ENCODE measurements at regions of chr9 and their contacts with region 1.

Region 1: DNA sequence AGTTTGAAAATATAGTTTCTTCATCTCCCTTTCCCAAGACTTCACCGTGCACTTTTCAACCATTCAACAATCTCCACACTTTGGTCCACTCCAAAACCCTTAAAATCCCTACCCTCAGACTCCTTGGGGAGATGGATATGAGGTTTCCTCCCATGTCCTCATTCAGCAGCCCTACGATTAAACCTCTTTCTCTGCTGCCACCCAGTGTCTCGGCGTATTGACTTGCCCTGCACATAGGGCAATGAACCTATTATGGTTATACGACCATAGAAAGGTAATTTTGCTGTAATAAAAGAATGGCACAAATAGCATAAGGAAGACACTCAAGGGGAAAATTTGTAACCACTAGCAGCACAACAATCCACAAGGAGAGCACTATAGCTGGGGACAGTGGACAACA is 803.5 kb downstream of the TLE1 start:
- DNase-seq: peak; percentile 51
- H3K4me3 ChIP-seq: no peak overlapping the region
- H3K27ac ChIP-seq: no peak overlapping the region
- H3K4me1 ChIP-seq: peaks cover 11% of the 10 kb centered on the region
- H3K27me3 ChIP-seq: no peaks in the 10 kb centered on the region
- CTCF ChIP-seq: peak; percentile 53

Region 2: DNA sequence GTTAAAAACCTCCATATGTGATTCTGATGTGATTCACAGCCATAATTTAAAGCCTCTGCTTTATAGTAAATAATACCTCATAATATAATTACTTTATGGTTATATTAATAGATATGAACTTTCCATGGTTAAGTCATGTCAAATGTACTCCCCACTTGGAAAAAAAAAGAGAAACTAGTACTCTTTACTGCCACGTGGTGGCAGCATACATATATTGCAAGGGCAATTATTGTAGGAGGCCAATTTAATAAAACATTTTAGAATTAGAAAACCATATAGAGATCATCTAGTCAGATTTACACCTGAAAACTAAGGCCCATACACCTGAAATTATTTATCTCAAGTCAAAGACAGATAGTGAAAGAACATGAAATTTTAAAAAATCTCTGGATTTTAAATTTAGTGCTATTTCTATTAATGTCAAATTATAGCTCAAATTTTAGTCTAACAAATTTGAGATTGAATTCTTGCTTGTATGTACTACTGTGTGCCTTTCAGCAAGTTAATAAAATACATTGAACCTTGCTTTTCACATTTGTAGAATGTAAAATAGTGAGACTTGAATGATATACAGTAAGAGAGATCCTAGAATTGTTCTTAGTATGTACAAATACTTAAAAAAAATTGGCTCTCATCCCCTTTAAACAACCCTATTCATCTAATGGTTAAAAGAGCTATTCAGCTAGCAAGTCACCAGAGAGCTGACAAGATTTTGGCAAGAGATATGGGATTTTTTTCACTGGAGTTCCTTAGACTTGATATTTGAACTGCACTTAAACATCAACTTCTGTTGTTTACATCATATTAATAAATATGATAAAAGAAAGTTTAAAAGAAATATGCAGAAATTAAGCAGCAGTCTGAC is 710.4 kb before region 1 on chr9:
- CTCF ChIA-PET with region 1: no interaction called
- POLR2A ChIA-PET with region 1: no interaction called
- intact Hi-C with region 1: loop called (anchors 10 kb)
- DNase-seq: peak; percentile 56
- H3K4me3 ChIP-seq: no peak overlapping the region
- H3K27ac ChIP-seq: no peak overlapping the region
- H3K4me1 ChIP-seq: peaks cover 3% of the 10 kb centered on the region
- H3K27me3 ChIP-seq: no peaks in the 10 kb centered on the region
- CTCF ChIP-seq: peak; percentile 78

Region 3: GRCh38 chr9:80440724-80441123 is 445.2 kb before region 1 on chr9:
- CTCF ChIA-PET with region 1: no interaction called
- POLR2A ChIA-PET with region 1: no interaction called
- intact Hi-C with region 1: loop called (anchors 10 kb)
- DNase-seq: peak; percentile 51
- H3K4me3 ChIP-seq: no peak overlapping the region
- H3K27ac ChIP-seq: no peak overlapping the region
- H3K4me1 ChIP-seq: peaks cover 26% of the 10 kb centered on the region
- H3K27me3 ChIP-seq: no peaks in the 10 kb centered on the region
- CTCF ChIP-seq: no peak

Region 4: DNA sequence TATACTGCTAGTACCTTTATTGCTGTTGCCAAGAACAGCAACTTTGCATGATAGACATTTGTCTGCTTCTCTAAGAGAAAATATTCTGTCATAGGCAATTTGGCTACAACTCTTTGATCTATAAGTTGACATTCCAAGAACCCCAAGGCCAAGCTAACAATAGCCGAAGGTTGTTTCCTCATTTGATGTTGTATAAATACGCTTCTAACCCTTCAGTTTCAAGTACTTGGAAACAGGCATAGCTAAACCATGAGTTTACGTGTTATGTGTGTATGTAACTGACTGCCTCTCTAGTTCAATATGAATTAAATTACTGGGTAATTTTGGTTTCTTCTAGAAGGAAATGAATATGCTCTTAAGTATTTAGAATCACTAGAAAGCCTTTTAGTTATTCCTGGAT is 280.1 kb before region 1 on chr9:
- CTCF ChIA-PET with region 1: no interaction called
- POLR2A ChIA-PET with region 1: no interaction called
- intact Hi-C with region 1: loop called (anchors 2 kb)
- DNase-seq: no peak
- H3K4me3 ChIP-seq: no peak overlapping the region
- H3K27ac ChIP-seq: no peak overlapping the region
- H3K4me1 ChIP-seq: no peaks in the 10 kb centered on the region
- H3K27me3 ChIP-seq: no peaks in the 10 kb centered on the region
- CTCF ChIP-seq: no peak

Region 5: GRCh38 chr9:80699511-80699998 is 186.3 kb before region 1 on chr9:
- CTCF ChIA-PET with region 1: no interaction called
- POLR2A ChIA-PET with region 1: no interaction called
- intact Hi-C with region 1: loop called (anchors 5 kb)
- DNase-seq: peak; percentile 94
- H3K4me3 ChIP-seq: no peak overlapping the region
- H3K27ac ChIP-seq: no peak overlapping the region
- H3K4me1 ChIP-seq: peaks cover 19% of the 10 kb centered on the region
- H3K27me3 ChIP-seq: no peaks in the 10 kb centered on the region
- CTCF ChIP-seq: no peak

Region 6: GRCh38 chr9:80926611-80927010 is 40.7 kb after region 1 on chr9:
- CTCF ChIA-PET with region 1: no interaction called
- POLR2A ChIA-PET with region 1: no interaction called
- intact Hi-C with region 1: loop called (anchors 1 kb)
- DNase-seq: no peak
- H3K4me3 ChIP-seq: no peak overlapping the region
- H3K27ac ChIP-seq: no peak overlapping the region
- H3K4me1 ChIP-seq: no peaks in the 10 kb centered on the region
- H3K27me3 ChIP-seq: no peaks in the 10 kb centered on the region
- CTCF ChIP-seq: no peak